Prostate gland (tissue), 2 donors: ENCODE measurements at regions of chr12 and their contacts with region 1.

Region 1: GRCh38 chr12:6778574-6779550 is 6.5 kb downstream of the LAG3 start:
- DNase-seq: peak; percentile 98
- H3K4me3 ChIP-seq: peak overlapping the region; percentile 20 to 34
- H3K27ac ChIP-seq: peak overlapping the region; percentile 89 to 92
- H3K4me1 ChIP-seq: peaks cover 2% of the 10 kb centered on the region
- H3K27me3 ChIP-seq: no peaks in the 10 kb centered on the region
- CTCF ChIP-seq: peak; percentile 93 to 100 (median 98)
- POLR2A ChIP-seq: peak; percentile 52

Region 2: GRCh38 chr12:6735448-6736191 is 43.2 kb before region 1 on chr12:
- intact Hi-C with region 1: loop called (anchors 5 kb)
- DNase-seq: peak; percentile 88
- H3K4me3 ChIP-seq: no peak overlapping the region
- H3K27ac ChIP-seq: peak overlapping the region; percentile 20 to 57
- H3K4me1 ChIP-seq: no peaks in the 10 kb centered on the region
- H3K27me3 ChIP-seq: no peaks in the 10 kb centered on the region
- CTCF ChIP-seq: peak; percentile 31 to 93 (median 82)
- POLR2A ChIP-seq: no peak

Region 3: GRCh38 chr12:6890789-6891645 is 112.2 kb after region 1 on chr12:
- intact Hi-C with region 1: no loop called
- DNase-seq: peak; percentile 97
- H3K4me3 ChIP-seq: peak overlapping the region; percentile 42 to 47
- H3K27ac ChIP-seq: peak overlapping the region; percentile 89 to 90
- H3K4me1 ChIP-seq: no peaks in the 10 kb centered on the region
- H3K27me3 ChIP-seq: no peaks in the 10 kb centered on the region
- CTCF ChIP-seq: peak; percentile 86 to 99 (median 97)
- POLR2A ChIP-seq: peak; percentile 64